Breast epithelium (tissue), 4 donors: ENCODE measurements at regions of chr3 and their contacts with region 1.

Region 1: DNA sequence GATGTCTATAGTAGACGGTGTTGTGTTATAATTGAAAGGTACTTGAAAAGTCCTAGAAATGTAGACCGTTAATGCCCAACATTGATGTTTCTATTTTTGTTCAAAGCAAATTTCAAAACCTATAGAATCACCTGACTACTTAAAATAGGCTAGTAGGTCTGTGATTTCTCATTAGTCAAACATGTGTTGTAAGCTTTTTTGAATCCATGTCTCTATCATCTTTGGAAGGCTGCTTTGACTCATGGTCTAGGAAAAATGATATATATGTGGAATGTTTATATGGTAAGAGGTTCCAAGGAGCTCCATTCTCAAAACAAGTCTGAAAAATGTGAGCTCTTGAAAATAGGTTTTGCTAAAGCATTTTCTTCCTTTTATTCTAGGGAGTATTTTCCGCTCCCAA is 375.3 kb downstream of the LPP start:
- DNase-seq: no peak
- H3K4me3 ChIP-seq: no peak overlapping the region
- H3K27ac ChIP-seq: no peak overlapping the region
- H3K4me1 ChIP-seq: no peaks in the 10 kb centered on the region
- H3K27me3 ChIP-seq: no peaks in the 10 kb centered on the region
- CTCF ChIP-seq: no peak
- POLR2A ChIP-seq: no peak

Region 2: GRCh38 chr3:187783098-187783497 is 746.1 kb before region 1 on chr3:
- intact Hi-C with region 1: no loop called
- DNase-seq: peak; percentile 61 to 65
- H3K4me3 ChIP-seq: no peak overlapping the region
- H3K27ac ChIP-seq: peak overlapping the region; percentile 60 to 67
- H3K4me1 ChIP-seq: no peaks in the 10 kb centered on the region
- H3K27me3 ChIP-seq: no peaks in the 10 kb centered on the region
- CTCF ChIP-seq: no peak
- POLR2A ChIP-seq: no peak

Region 3: GRCh38 chr3:188752850-188753249 is 223.6 kb after region 1 on chr3:
- intact Hi-C with region 1: loop called (anchors 2 kb)
- DNase-seq: no peak
- H3K4me3 ChIP-seq: no peak overlapping the region
- H3K27ac ChIP-seq: no peak overlapping the region
- H3K4me1 ChIP-seq: no peaks in the 10 kb centered on the region
- H3K27me3 ChIP-seq: no peaks in the 10 kb centered on the region
- CTCF ChIP-seq: no peak
- POLR2A ChIP-seq: no peak